ENCODE measurements at regions of chr16 and their contacts with region 1.

Region 1: GRCh38 chr16:78099372-78100161 is at the start of gene WWOX:
- H3K4me3 Mint-ChIP-seq: peak within 1 kb of the TSS; percentile 95
- H3K27ac Mint-ChIP-seq: peak within 1 kb of the TSS; percentile 95
- H3K4me1 Mint-ChIP-seq: peaks cover 27% of the 10 kb centered on the region
- H3K27me3 Mint-ChIP-seq: peaks cover 7% of the 10 kb centered on the region

Region 2: GRCh38 chr16:77722309-77723107 is 377.1 kb before region 1 on chr16 and contains the start of gene NUDT7:
- intact Hi-C with region 1: loop called (anchors 2 kb)
- H3K4me3 Mint-ChIP-seq: peak within 1 kb of the TSS; percentile 90
- H3K27ac Mint-ChIP-seq: peak within 1 kb of the TSS; percentile 95
- H3K4me1 Mint-ChIP-seq: peaks cover 14% of the 10 kb centered on the region
- H3K27me3 Mint-ChIP-seq: peaks cover 9% of the 10 kb centered on the region

Region 3: DNA sequence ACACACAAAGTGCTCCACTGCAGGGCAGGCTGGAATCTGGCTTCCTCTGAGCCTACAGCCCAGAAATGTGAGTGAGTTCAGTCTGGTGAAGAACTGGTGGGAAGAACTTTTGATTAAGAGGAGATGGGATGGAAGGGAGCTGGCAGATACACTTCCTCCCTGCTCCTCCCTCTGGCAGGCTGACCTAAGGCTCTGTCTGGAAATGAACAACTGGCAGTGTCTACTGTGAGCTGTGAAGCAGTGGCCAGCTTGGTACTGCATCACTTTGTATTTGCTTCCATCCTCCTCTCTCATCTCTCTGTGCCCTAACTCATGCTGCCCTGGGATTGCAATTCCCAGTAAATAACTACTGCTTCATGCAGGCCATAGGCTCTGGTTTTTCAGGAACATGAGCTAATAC is 1455.3 kb after region 1 on chr16:
- intact Hi-C with region 1: no loop called
- H3K4me3 Mint-ChIP-seq: no peak overlapping the region
- H3K27ac Mint-ChIP-seq: no peak overlapping the region
- H3K4me1 Mint-ChIP-seq: peaks cover 17% of the 10 kb centered on the region
- H3K27me3 Mint-ChIP-seq: peaks cover 71% of the 10 kb centered on the region